Caco-2 (cell line): ENCODE measurements at regions of chr5 and their contacts with region 1.

Region 1: DNA sequence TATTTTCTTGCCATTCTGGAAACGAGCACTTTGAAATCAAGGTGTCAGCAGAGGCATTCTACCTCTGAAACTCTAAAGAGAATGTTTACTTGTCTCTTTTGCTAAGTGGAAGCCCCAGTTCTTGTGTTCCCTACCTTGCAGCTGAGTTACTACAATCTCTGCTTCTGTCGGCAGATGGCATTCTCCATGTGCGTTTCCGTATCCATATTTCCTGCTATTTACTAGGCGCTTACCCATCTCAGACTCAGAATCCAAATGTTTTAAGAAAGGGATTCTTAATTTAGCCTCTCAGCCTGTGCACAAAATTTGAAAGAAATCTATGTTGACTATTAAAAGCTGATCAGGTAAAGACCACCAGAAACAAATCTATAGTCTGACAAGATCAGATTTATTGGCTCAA is 221.3 kb upstream of the FTMT start:
- DNase-seq: peak in 1 of 2 experiments; percentile 28
- H3K4me3 ChIP-seq: no peak overlapping the region
- H3K4me3 Mint-ChIP-seq: no peak overlapping the region
- H3K27ac Mint-ChIP-seq: no peak overlapping the region
- H3K4me1 ChIP-seq: no peaks in the 10 kb centered on the region
- H3K4me1 Mint-ChIP-seq: peaks cover 7% of the 10 kb centered on the region
- H3K27me3 ChIP-seq: no peaks in the 10 kb centered on the region
- H3K27me3 Mint-ChIP-seq: no peaks in the 10 kb centered on the region
- CTCF ChIP-seq: peak; percentile 17 to 51

Region 2: GRCh38 chr5:121516997-121517396 is 113.4 kb before region 1 on chr5:
- CTCF ChIA-PET with region 1: no interaction called
- POLR2A ChIA-PET with region 1: no interaction called
- intact Hi-C with region 1: no loop called
- DNase-seq: no peak
- H3K4me3 ChIP-seq: no peak overlapping the region
- H3K4me3 Mint-ChIP-seq: no peak overlapping the region
- H3K27ac Mint-ChIP-seq: no peak overlapping the region
- H3K4me1 ChIP-seq: no peaks in the 10 kb centered on the region
- H3K4me1 Mint-ChIP-seq: no peaks in the 10 kb centered on the region
- H3K27me3 ChIP-seq: no peaks in the 10 kb centered on the region
- H3K27me3 Mint-ChIP-seq: no peaks in the 10 kb centered on the region
- CTCF ChIP-seq: no peak

Region 3: GRCh38 chr5:121870489-121870888 is 240.1 kb after region 1 on chr5:
- CTCF ChIA-PET with region 1: no interaction called
- POLR2A ChIA-PET with region 1: no interaction called
- intact Hi-C with region 1: loop called (anchors 1 kb)
- DNase-seq: peak in 1 of 2 experiments; percentile 8
- H3K4me3 ChIP-seq: no peak overlapping the region
- H3K4me3 Mint-ChIP-seq: no peak overlapping the region
- H3K27ac Mint-ChIP-seq: no peak overlapping the region
- H3K4me1 ChIP-seq: no peaks in the 10 kb centered on the region
- H3K4me1 Mint-ChIP-seq: no peaks in the 10 kb centered on the region
- H3K27me3 ChIP-seq: no peaks in the 10 kb centered on the region
- H3K27me3 Mint-ChIP-seq: no peaks in the 10 kb centered on the region
- CTCF ChIP-seq: peak; percentile 17 to 21

Region 4: GRCh38 chr5:121949867-121950266 is 319.5 kb after region 1 on chr5:
- CTCF ChIA-PET with region 1: no interaction called
- POLR2A ChIA-PET with region 1: no interaction called
- intact Hi-C with region 1: loop called (anchors 2 kb)
- DNase-seq: peak; percentile 45 to 65
- H3K4me3 ChIP-seq: no peak overlapping the region
- H3K4me3 Mint-ChIP-seq: no peak overlapping the region
- H3K27ac Mint-ChIP-seq: no peak overlapping the region
- H3K4me1 ChIP-seq: no peaks in the 10 kb centered on the region
- H3K4me1 Mint-ChIP-seq: no peaks in the 10 kb centered on the region
- H3K27me3 ChIP-seq: no peaks in the 10 kb centered on the region
- H3K27me3 Mint-ChIP-seq: no peaks in the 10 kb centered on the region
- CTCF ChIP-seq: peak; percentile 64 to 77